Gastrocnemius medialis (tissue), 4 donors: ENCODE measurements at regions of chr7 and their contacts with region 1.

Region 1: DNA sequence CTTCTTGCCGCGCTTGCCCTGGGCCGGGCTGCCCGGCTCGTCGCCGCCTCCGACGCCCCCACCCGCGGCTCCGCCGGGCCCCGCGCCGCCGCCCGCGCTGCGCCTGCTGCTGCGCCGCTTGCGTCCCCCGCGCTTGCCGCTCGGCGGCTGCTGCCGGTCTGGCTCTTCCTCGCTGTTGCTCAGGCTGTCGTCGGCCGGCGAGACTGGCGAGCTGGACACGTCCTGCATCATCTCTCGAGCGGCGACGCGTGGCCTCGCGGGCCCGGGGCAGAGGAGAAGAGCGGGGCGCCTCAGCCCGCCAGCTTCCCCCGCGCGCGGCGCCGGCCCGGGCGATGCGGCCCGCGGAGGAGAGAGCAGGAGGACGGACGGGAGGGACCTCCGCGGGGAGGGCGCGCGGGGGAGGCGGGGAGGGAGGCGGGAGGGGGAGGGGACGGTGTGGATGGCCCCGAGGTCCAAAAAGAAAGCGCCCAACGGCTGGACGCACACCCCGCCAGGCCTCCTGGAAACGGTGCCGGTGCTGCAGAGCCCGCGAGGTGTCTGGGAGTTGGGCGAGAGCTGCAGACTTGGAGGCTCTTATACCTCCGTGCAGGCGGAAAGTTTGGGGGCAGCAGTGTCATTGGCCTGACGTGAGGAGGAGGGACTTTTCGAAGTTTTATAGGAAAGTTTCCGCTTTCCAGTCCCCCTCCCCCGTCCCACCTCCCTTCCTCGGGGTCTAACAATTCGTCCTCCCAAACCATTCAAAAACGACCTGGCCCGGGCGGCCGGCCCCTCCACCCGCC is at the start of gene TWIST1:
- DNase-seq: no peak
- ATAC-seq: peak; percentile 46 to 57
- H3K4me3 ChIP-seq: peak within 1 kb of the TSS; percentile 48 to 65 (median 50)
- H3K27ac ChIP-seq: no peak within 1 kb of the TSS
- H3K4me1 ChIP-seq: peaks cover 0 to 15% of the 10 kb centered on the region in 2 donors
- H3K27me3 ChIP-seq: peaks cover 73 to 89% (median 84%) of the 10 kb centered on the region in 3 donors
- CTCF ChIP-seq: no peak
- POLR2A ChIP-seq: no peak
- total RNA-seq, gene TWIST1: 1.9 TPM in 1 of 4 donors, not detected in the others

Region 2: GRCh38 chr7:19621740-19622139 is 504.5 kb after region 1 on chr7:
- in situ Hi-C with region 1: no loop called
- intact Hi-C with region 1: loop called (anchors 5 kb)
- DNase-seq: no peak
- ATAC-seq: peak; percentile 51 to 65
- H3K4me3 ChIP-seq: no peak overlapping the region
- H3K27ac ChIP-seq: no peak overlapping the region
- H3K4me1 ChIP-seq: no peaks in the 10 kb centered on the region
- H3K27me3 ChIP-seq: no peaks in the 10 kb centered on the region
- CTCF ChIP-seq: peak in 1 of 5 experiments; percentile 9
- POLR2A ChIP-seq: no peak

Region 3: DNA sequence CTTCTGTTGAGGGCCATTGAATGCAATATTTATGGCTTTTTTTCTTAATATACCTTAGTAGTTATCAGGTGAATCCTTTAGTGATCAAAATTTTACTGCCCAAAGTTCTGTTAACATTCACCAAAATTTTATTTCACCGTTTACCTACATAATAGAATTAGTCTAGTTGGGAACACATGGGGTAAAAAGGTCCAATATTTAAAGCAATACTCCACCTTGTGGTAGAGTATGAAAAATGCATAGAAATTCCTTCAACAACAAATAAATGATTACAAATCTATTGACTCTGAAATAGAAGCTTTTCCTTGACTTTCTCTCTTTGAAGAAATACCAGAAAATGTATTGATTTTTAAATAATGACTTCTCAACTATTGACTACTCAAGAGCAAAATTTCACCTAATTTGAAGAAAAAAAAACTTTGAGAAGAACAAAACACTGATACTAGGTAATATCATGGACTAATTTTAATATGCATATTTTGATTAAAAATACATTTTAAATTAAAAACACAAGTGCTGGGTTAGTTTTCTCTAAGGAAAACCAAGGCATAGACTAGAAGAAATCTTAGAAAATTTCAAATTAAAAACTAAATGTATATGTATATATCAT is 548.2 kb after region 1 on chr7:
- in situ Hi-C with region 1: no loop called
- intact Hi-C with region 1: loop called (anchors 10 kb)
- DNase-seq: no peak
- ATAC-seq: no peak
- H3K4me3 ChIP-seq: no peak overlapping the region
- H3K27ac ChIP-seq: no peak overlapping the region
- H3K4me1 ChIP-seq: peaks cover 0 to 5% of the 10 kb centered on the region in 2 donors
- H3K27me3 ChIP-seq: no peaks in the 10 kb centered on the region
- CTCF ChIP-seq: peak in 4 of 5 experiments; percentile 40 to 63 (median 46)
- POLR2A ChIP-seq: no peak